Ovary (tissue), 10 donors: ENCODE measurements at regions of chr10 and their contacts with region 1.

Region 1: GRCh38 chr10:80498833-80499741 is 38.6 kb upstream of the SH2D4B start:
- DNase-seq: peak; percentile 89 to 96 (median 94)
- H3K4me3 ChIP-seq: no peak overlapping the region
- H3K27ac ChIP-seq: peak overlapping the region; percentile 66 to 79
- H3K4me1 ChIP-seq: peaks cover 47% of the 10 kb centered on the region
- H3K27me3 ChIP-seq: no peaks in the 10 kb centered on the region
- CTCF ChIP-seq: no peak
- EP300 ChIP-seq: no peak
- POLR2A ChIP-seq: no peak

Region 2: GRCh38 chr10:80408242-80409101 is 90.6 kb before region 1 on chr10 and contains the start of gene PRXL2A:
- intact Hi-C with region 1: loop called in 1 of 4 experiments (anchors 10 kb)
- DNase-seq: peak; percentile 87 to 90 (median 88)
- H3K4me3 ChIP-seq: peak within 1 kb of the TSS; percentile 88
- H3K27ac ChIP-seq: peak within 1 kb of the TSS; percentile 75 to 81
- H3K4me1 ChIP-seq: peaks cover 17% of the 10 kb centered on the region
- H3K27me3 ChIP-seq: no peaks in the 10 kb centered on the region
- CTCF ChIP-seq: peak in 1 of 3 donors; percentile 7
- EP300 ChIP-seq: no peak
- POLR2A ChIP-seq: peak; percentile 26
- total RNA-seq, gene PRXL2A: 26.7 to 54.9 (median 43.7) TPM

Region 3: GRCh38 chr10:80453701-80454513 is 45.2 kb before region 1 on chr10 and contains the start of gene TSPAN14:
- intact Hi-C with region 1: loop called in 3 of 4 experiments (anchors 2 to 5 kb)
- DNase-seq: peak; percentile 86 to 91 (median 89)
- H3K4me3 ChIP-seq: peak within 1 kb of the TSS; percentile 97
- H3K27ac ChIP-seq: peak within 1 kb of the TSS; percentile 94 to 97
- H3K4me1 ChIP-seq: peaks cover 13% of the 10 kb centered on the region
- H3K27me3 ChIP-seq: no peaks in the 10 kb centered on the region
- CTCF ChIP-seq: no peak
- EP300 ChIP-seq: no peak
- POLR2A ChIP-seq: peak; percentile 58
- total RNA-seq, gene TSPAN14: 38.5 to 103 (median 74.8) TPM

Region 4: GRCh38 chr10:80460399-80461207 is 38.5 kb before region 1 on chr10:
- intact Hi-C with region 1: loop called in 2 of 4 experiments (anchors 2 to 5 kb)
- DNase-seq: peak; percentile 44 to 65 (median 64)
- H3K4me3 ChIP-seq: no peak overlapping the region
- H3K27ac ChIP-seq: peak overlapping the region in 1 of 2 donors; percentile 47
- H3K4me1 ChIP-seq: peaks cover 49% of the 10 kb centered on the region
- H3K27me3 ChIP-seq: no peaks in the 10 kb centered on the region
- CTCF ChIP-seq: no peak
- EP300 ChIP-seq: no peak
- POLR2A ChIP-seq: no peak